ENCODE measurements at regions of chr1 and their contacts with region 1.

Region 1: DNA sequence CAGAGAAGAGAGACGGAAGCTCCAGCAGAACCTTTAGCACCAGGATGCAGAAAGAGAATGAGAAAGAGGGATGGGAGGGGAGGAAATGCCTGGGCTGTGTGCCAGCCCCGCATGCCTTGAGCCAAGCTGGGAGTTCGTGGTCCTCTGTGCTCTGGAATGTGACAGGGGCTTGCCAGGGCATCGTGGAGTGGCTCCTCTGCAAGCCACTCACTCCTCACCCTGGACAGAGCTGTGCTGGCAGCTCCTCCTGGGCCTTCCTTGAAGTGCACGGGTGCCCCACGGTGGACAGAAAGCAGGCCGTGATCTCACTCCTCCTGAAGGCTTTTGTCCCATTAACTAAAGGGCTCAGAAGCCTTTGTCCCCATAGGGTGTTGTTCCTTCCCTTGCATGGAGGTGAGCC is 34.8 kb upstream of the PRELP start:
- DNase-seq: peak; percentile 72
- ATAC-seq: peak; percentile 99
- H3K4me3 ChIP-seq: no peak overlapping the region
- H3K27ac ChIP-seq: no peak overlapping the region
- H3K4me1 ChIP-seq: peaks cover 7% of the 10 kb centered on the region; the same call in 1 of the 2 replicates
- H3K27me3 ChIP-seq: peaks cover 24% of the 10 kb centered on the region
- CTCF ChIP-seq: peak; percentile 73
- POLR2A ChIP-seq: no peak
- RAD21 ChIP-seq: peak; percentile 85

Region 2: GRCh38 chr1:203486618-203487370 is 46.0 kb after region 1 on chr1:
- CTCF ChIA-PET with region 1: interaction called, 4 read pairs
- POLR2A ChIA-PET with region 1: no interaction called
- dilution Hi-C with region 1: no loop called
- in situ Hi-C with region 1: no loop called
- intact Hi-C with region 1: loop called (anchors 1 kb)
- DNase-seq: no peak
- ATAC-seq: no peak
- H3K4me3 ChIP-seq: no peak overlapping the region
- H3K27ac ChIP-seq: peak overlapping the region; percentile 72
- H3K4me1 ChIP-seq: peaks cover 3% of the 10 kb centered on the region; the same call in 1 of the 2 replicates
- H3K27me3 ChIP-seq: no peaks in the 10 kb centered on the region
- CTCF ChIP-seq: no peak
- POLR2A ChIP-seq: no peak
- RAD21 ChIP-seq: no peak

Region 3: GRCh38 chr1:203558064-203558760 is 117.4 kb after region 1 on chr1:
- CTCF ChIA-PET with region 1: no interaction called
- POLR2A ChIA-PET with region 1: no interaction called
- dilution Hi-C with region 1: no loop called
- in situ Hi-C with region 1: no loop called
- intact Hi-C with region 1: no loop called
- DNase-seq: peak; percentile 100
- ATAC-seq: peak; percentile 69
- H3K4me3 ChIP-seq: no peak overlapping the region
- H3K27ac ChIP-seq: peak overlapping the region; percentile 92
- H3K4me1 ChIP-seq: peaks cover 35% of the 10 kb centered on the region
- H3K27me3 ChIP-seq: no peaks in the 10 kb centered on the region
- CTCF ChIP-seq: no peak
- POLR2A ChIP-seq: peak; percentile 76
- RAD21 ChIP-seq: peak; percentile 41